PC-3 (cell line): ENCODE measurements at regions of chr12 and their contacts with region 1.

Region 1: GRCh38 chr12:49264738-49265515 is at the start of gene TUBA1C:
- DNase-seq: peak; percentile 98
- ATAC-seq: peak; percentile 68
- H3K4me3 ChIP-seq: peak within 1 kb of the TSS; percentile 99
- H3K27ac ChIP-seq: peak within 1 kb of the TSS; percentile 99
- H3K4me1 ChIP-seq: peaks cover 42% of the 10 kb centered on the region
- H3K27me3 ChIP-seq: no peaks in the 10 kb centered on the region
- CTCF ChIP-seq: no peak
- total RNA-seq, gene TUBA1C: 1,285 and 1,376 TPM in 2 replicates

Region 2: GRCh38 chr12:49279706-49280159 is 14.8 kb after region 1 on chr12:
- CTCF ChIA-PET with region 1: no interaction called
- POLR2A ChIA-PET with region 1: interaction called, 19 read pairs
- intact Hi-C with region 1: no loop called
- DNase-seq: no peak
- ATAC-seq: no peak
- H3K4me3 ChIP-seq: no peak overlapping the region
- H3K27ac ChIP-seq: no peak overlapping the region
- H3K4me1 ChIP-seq: peaks cover 7% of the 10 kb centered on the region
- H3K27me3 ChIP-seq: no peaks in the 10 kb centered on the region
- CTCF ChIP-seq: no peak

Region 3: GRCh38 chr12:49304161-49304560 is 39.2 kb after region 1 on chr12:
- CTCF ChIA-PET with region 1: no interaction called
- POLR2A ChIA-PET with region 1: no interaction called
- intact Hi-C with region 1: no loop called
- DNase-seq: no peak
- ATAC-seq: no peak
- H3K4me3 ChIP-seq: no peak overlapping the region
- H3K27ac ChIP-seq: no peak overlapping the region
- H3K4me1 ChIP-seq: no peaks in the 10 kb centered on the region
- H3K27me3 ChIP-seq: no peaks in the 10 kb centered on the region
- CTCF ChIP-seq: no peak